CD8-positive, alpha-beta T cell (primary cell): ENCODE measurements at regions of chr13 and their contacts with region 1.

Region 1: GRCh38 chr13:68323124-68323523 is 1093.0 kb upstream of the PCDH9 start:
- DNase-seq: no peak
- ATAC-seq: no peak
- H3K4me3 ChIP-seq: no peak overlapping the region
- H3K4me3 Mint-ChIP-seq: no peak overlapping the region
- H3K27ac ChIP-seq: no peak overlapping the region
- H3K27ac Mint-ChIP-seq: no peak overlapping the region
- H3K4me1 ChIP-seq: no peaks in the 10 kb centered on the region
- H3K4me1 Mint-ChIP-seq: no peaks in the 10 kb centered on the region
- H3K27me3 ChIP-seq: no peaks in the 10 kb centered on the region
- H3K27me3 Mint-ChIP-seq: no peaks in the 10 kb centered on the region
- CTCF ChIP-seq: no peak

Region 2: GRCh38 chr13:67990868-67991267 is 332.3 kb before region 1 on chr13:
- CTCF ChIA-PET with region 1: no interaction called
- POLR2A ChIA-PET with region 1: no interaction called
- intact Hi-C with region 1: no loop called
- DNase-seq: no peak
- ATAC-seq: no peak
- H3K4me3 ChIP-seq: no peak overlapping the region
- H3K4me3 Mint-ChIP-seq: no peak overlapping the region
- H3K27ac ChIP-seq: no peak overlapping the region
- H3K27ac Mint-ChIP-seq: no peak overlapping the region
- H3K4me1 ChIP-seq: no peaks in the 10 kb centered on the region
- H3K4me1 Mint-ChIP-seq: no peaks in the 10 kb centered on the region
- H3K27me3 ChIP-seq: no peaks in the 10 kb centered on the region
- H3K27me3 Mint-ChIP-seq: no peaks in the 10 kb centered on the region
- CTCF ChIP-seq: no peak

Region 3: DNA sequence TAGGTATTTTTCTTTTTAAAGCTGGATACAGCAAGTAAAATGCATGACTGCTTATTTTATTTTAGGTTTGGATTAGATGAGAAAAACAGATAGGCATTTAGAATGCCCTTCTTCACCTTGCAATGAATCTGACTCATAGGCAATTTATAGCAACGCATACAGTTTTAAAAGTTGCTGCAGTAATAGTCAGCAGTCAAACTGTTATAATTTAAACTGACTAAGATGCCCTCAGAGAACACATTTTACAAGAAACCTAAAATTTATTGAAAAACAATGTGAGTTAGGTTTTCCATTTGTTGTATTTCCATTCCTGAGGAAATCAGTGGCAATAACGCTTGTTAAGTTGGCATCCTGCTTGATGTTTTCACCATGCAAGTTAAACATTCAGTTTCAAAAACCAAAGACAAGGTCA is 35.2 kb after region 1 on chr13:
- CTCF ChIA-PET with region 1: no interaction called
- POLR2A ChIA-PET with region 1: no interaction called
- intact Hi-C with region 1: loop called in 1 of 2 experiments (anchors 1 kb)
- DNase-seq: no peak
- ATAC-seq: no peak
- H3K4me3 ChIP-seq: no peak overlapping the region
- H3K4me3 Mint-ChIP-seq: no peak overlapping the region
- H3K27ac ChIP-seq: no peak overlapping the region
- H3K27ac Mint-ChIP-seq: no peak overlapping the region
- H3K4me1 ChIP-seq: no peaks in the 10 kb centered on the region
- H3K4me1 Mint-ChIP-seq: no peaks in the 10 kb centered on the region
- H3K27me3 ChIP-seq: no peaks in the 10 kb centered on the region
- H3K27me3 Mint-ChIP-seq: no peaks in the 10 kb centered on the region
- CTCF ChIP-seq: no peak